Natural killer cell (primary cell): ENCODE measurements at regions of chr7 and their contacts with region 1.

Region 1: GRCh38 chr7:103296901-103297836 is at the start of gene PMPCB:
- DNase-seq: peak; percentile 96 to 99
- ATAC-seq: peak; percentile 98 to 100 (median 98)
- H3K4me3 ChIP-seq: peak within 1 kb of the TSS; percentile 93
- H3K4me3 Mint-ChIP-seq: peak within 1 kb of the TSS; percentile 92
- H3K27ac ChIP-seq: peak within 1 kb of the TSS; percentile 96
- H3K27ac Mint-ChIP-seq: peak within 1 kb of the TSS; percentile 91 to 93
- H3K4me1 ChIP-seq: peaks cover 6% of the 10 kb centered on the region
- H3K4me1 Mint-ChIP-seq: peaks cover 22 to 23% of the 10 kb centered on the region in 2 donors
- H3K27me3 ChIP-seq: peaks cover 1% of the 10 kb centered on the region
- H3K27me3 Mint-ChIP-seq: peaks cover 0 to 17% of the 10 kb centered on the region in 2 donors
- CTCF ChIP-seq: peak; percentile 89
- total RNA-seq, gene PMPCB: 65.4 to 77.9 (median 75.9) TPM

Region 2: DNA sequence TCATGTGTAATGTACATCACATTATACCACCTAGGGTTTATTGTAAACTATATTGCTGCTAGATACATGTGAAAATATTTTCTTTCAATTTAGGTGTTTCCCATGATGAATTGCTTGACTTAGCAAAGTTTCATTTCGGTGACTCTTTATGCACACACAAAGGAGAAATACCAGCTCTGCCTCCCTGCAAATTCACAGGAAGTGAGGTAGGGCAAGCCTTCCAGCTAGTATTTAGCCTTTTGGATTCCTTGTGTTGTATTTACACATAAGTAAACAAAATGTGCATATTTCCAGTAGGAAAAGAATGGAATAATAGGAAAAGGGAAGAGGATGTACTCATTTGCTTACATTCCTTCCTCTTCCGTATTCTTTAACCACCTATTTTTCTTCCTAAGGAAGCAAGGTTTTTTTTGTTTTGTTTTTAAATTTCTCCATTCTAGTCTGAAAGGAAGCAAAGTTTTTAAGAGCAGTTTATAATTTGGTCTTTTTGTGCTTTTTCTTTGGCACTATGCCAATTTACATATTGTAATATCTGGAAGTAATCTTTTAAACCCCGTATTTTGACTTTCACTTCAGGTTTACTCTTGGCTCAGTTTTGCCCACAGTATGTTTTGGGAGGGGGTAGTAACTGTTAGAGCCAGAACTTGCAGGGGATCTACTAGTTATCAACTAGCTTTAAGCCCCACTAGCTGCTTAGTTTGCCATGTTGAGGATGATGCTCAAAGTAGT is 10.5 kb after region 1 on chr7:
- intact Hi-C with region 1: no loop called
- DNase-seq: no peak
- ATAC-seq: no peak
- H3K4me3 ChIP-seq: no peak overlapping the region
- H3K4me3 Mint-ChIP-seq: no peak overlapping the region
- H3K27ac ChIP-seq: no peak overlapping the region
- H3K27ac Mint-ChIP-seq: peak overlapping the region in 1 of 2 donors; percentile 23
- H3K4me1 ChIP-seq: no peaks in the 10 kb centered on the region
- H3K4me1 Mint-ChIP-seq: peaks cover 6 to 7% of the 10 kb centered on the region in 2 donors
- H3K27me3 ChIP-seq: no peaks in the 10 kb centered on the region
- H3K27me3 Mint-ChIP-seq: no peaks in the 10 kb centered on the region
- CTCF ChIP-seq: no peak

Region 3: DNA sequence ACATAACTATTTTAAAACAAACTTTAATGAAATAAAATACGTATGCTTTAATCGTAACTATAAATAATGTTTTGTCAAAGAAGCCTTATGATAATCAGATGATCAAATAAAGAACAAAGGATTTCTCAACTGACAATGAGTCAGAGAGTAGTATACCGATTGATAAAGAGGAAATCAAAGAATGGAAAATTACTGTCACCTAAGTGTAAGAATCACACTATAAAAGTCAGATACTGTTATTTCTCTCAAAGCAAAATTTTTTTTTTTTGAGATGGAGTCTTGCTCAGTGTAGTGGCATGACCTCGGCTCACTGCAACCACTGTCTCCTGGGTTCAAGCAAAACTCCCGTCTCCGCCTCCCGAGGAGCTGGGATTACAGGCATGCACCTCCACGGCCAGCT is 28.6 kb after region 1 on chr7:
- intact Hi-C with region 1: no loop called
- DNase-seq: no peak
- ATAC-seq: no peak
- H3K4me3 ChIP-seq: no peak overlapping the region
- H3K4me3 Mint-ChIP-seq: no peak overlapping the region
- H3K27ac ChIP-seq: no peak overlapping the region
- H3K27ac Mint-ChIP-seq: no peak overlapping the region
- H3K4me1 ChIP-seq: no peaks in the 10 kb centered on the region
- H3K4me1 Mint-ChIP-seq: no peaks in the 10 kb centered on the region
- H3K27me3 ChIP-seq: no peaks in the 10 kb centered on the region
- H3K27me3 Mint-ChIP-seq: no peaks in the 10 kb centered on the region
- CTCF ChIP-seq: no peak

Region 4: GRCh38 chr7:103344453-103345149 is 47.4 kb after region 1 on chr7 and contains the start of gene DNAJC2:
- intact Hi-C with region 1: loop called (anchors 1 kb)
- DNase-seq: peak; percentile 76 to 95
- ATAC-seq: peak; percentile 87 to 95 (median 92)
- H3K4me3 ChIP-seq: peak within 1 kb of the TSS; percentile 83
- H3K4me3 Mint-ChIP-seq: peak within 1 kb of the TSS; percentile 99
- H3K27ac ChIP-seq: peak within 1 kb of the TSS; percentile 81
- H3K27ac Mint-ChIP-seq: peak within 1 kb of the TSS; percentile 94 to 96
- H3K4me1 ChIP-seq: peaks cover 17% of the 10 kb centered on the region
- H3K4me1 Mint-ChIP-seq: peaks cover 55% of the 10 kb centered on the region in 2 donors
- H3K27me3 ChIP-seq: no peaks in the 10 kb centered on the region
- H3K27me3 Mint-ChIP-seq: no peaks in the 10 kb centered on the region
- CTCF ChIP-seq: no peak
- total RNA-seq, gene DNAJC2: 56.8 to 74.2 (median 59.9) TPM

Region 5: DNA sequence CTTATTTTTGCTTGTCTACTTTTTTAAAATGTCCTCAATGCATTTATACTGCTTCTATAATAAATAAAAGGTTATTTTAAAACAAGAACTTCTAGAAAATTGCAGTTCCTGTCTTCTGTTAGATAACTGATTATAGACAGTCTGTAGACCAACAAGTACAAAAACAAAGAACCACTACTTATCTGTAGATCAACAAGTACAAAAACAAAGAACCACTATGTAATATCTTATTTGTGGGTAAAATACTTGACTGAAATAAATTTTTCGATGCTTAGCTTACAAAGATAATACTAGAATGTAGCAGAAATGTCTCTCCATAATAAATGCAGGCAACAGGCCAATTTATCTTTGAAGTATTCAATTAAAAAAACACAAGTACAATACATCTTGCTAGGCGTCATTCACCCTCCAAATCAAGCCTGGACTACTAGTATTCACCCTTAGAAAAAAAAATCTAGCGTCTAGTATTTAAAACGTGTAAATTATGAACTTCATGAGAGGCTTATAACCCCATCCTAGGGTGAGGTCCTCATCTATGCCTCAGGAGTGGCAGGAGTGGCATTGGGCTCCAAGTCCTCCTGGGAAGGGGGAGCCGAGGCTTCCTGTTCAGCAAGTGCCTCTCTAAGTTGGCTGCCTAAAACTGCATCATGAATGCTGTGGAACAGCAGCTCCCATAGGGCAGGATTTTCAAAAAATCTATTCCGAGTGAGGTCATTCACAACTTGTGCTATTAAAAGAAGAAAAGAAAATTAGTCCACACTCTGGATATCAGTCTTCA is 76.9 kb after region 1 on chr7:
- intact Hi-C with region 1: no loop called
- DNase-seq: no peak
- ATAC-seq: no peak
- H3K4me3 ChIP-seq: no peak overlapping the region
- H3K4me3 Mint-ChIP-seq: no peak overlapping the region
- H3K27ac ChIP-seq: no peak overlapping the region
- H3K27ac Mint-ChIP-seq: no peak overlapping the region
- H3K4me1 ChIP-seq: no peaks in the 10 kb centered on the region
- H3K4me1 Mint-ChIP-seq: no peaks in the 10 kb centered on the region
- H3K27me3 ChIP-seq: peaks cover 6% of the 10 kb centered on the region
- H3K27me3 Mint-ChIP-seq: peaks cover 5 to 10% of the 10 kb centered on the region in 2 donors
- CTCF ChIP-seq: no peak

Region 6: GRCh38 chr7:103392018-103392417 is 94.8 kb after region 1 on chr7:
- intact Hi-C with region 1: no loop called
- DNase-seq: no peak
- ATAC-seq: no peak
- H3K4me3 ChIP-seq: no peak overlapping the region
- H3K4me3 Mint-ChIP-seq: no peak overlapping the region
- H3K27ac ChIP-seq: no peak overlapping the region
- H3K27ac Mint-ChIP-seq: no peak overlapping the region
- H3K4me1 ChIP-seq: no peaks in the 10 kb centered on the region
- H3K4me1 Mint-ChIP-seq: no peaks in the 10 kb centered on the region
- H3K27me3 ChIP-seq: no peaks in the 10 kb centered on the region
- H3K27me3 Mint-ChIP-seq: peaks cover 2 to 18% of the 10 kb centered on the region in 2 donors
- CTCF ChIP-seq: no peak

Region 7: GRCh38 chr7:103413407-103413806 is 116.2 kb after region 1 on chr7:
- intact Hi-C with region 1: loop called (anchors 5 kb)
- DNase-seq: no peak
- ATAC-seq: no peak
- H3K4me3 ChIP-seq: no peak overlapping the region
- H3K4me3 Mint-ChIP-seq: no peak overlapping the region
- H3K27ac ChIP-seq: no peak overlapping the region
- H3K27ac Mint-ChIP-seq: no peak overlapping the region
- H3K4me1 ChIP-seq: no peaks in the 10 kb centered on the region
- H3K4me1 Mint-ChIP-seq: no peaks in the 10 kb centered on the region
- H3K27me3 ChIP-seq: no peaks in the 10 kb centered on the region
- H3K27me3 Mint-ChIP-seq: peaks cover 14% of the 10 kb centered on the region in 2 donors
- CTCF ChIP-seq: no peak

Region 8: GRCh38 chr7:104156842-104157277 is 859.7 kb after region 1 on chr7:
- intact Hi-C with region 1: loop called (anchors 5 kb)
- DNase-seq: peak in 1 of 2 donors; percentile 15
- ATAC-seq: no peak
- H3K4me3 ChIP-seq: no peak overlapping the region
- H3K4me3 Mint-ChIP-seq: no peak overlapping the region
- H3K27ac ChIP-seq: no peak overlapping the region
- H3K27ac Mint-ChIP-seq: no peak overlapping the region
- H3K4me1 ChIP-seq: no peaks in the 10 kb centered on the region
- H3K4me1 Mint-ChIP-seq: no peaks in the 10 kb centered on the region
- H3K27me3 ChIP-seq: no peaks in the 10 kb centered on the region
- H3K27me3 Mint-ChIP-seq: no peaks in the 10 kb centered on the region
- CTCF ChIP-seq: peak; percentile 14